H1 (cell line): ENCODE measurements at regions of chr1 and their contacts with region 1.

Region 1: DNA sequence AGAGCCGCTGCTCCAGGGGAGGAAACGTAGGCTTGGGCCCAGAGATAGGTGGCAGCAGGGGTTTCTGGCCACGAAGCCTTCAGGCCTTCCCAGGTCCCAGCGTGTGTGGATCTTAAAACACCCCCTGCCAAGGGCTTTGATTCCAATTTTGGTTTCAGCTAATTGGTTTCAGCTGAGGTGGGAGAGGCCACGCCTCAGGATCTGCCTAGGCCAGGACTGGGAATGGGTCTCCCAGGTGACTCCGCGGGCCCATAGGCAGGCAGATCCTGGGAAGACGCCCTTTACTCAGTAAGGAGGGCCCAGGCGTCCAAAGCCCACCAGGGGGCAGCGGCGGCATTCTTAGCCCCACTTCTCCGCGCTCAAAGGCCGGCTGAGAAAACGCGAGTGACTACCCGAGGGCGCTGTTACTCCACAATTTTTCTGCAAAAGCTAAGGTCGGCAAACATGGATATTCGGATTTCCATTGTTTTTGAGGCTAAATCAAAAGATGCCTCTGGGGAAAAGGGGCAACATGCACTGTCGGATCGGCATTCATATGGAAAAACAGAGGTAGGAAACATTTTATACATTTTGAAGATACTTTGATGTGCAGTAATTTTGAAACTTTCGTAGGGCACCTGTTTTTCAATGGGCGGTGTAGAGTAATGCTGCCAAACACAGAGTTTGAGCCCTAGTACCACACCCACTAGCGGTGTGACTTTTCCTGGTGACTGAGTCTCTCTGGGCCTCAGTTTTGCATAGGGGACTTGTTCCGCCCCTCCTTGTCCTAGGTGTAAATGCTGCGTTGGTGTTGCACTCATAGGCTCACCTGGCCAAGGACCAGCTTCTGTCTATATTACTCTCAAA is 31.8 kb upstream of the BCL10 start:
- DNase-seq: peak; percentile 82 to 95
- H3K4me3 ChIP-seq: no peak overlapping the region; a peak in 2 of 8 replicates
- H3K27ac ChIP-seq: no peak overlapping the region
- H3K4me1 ChIP-seq: peaks cover 2 to 6% (median 3%) of the 10 kb centered on the region in 4 experiments; a peak in 4 of 7 replicates
- H3K27me3 ChIP-seq: no peaks in the 10 kb centered on the region
- CTCF ChIP-seq: peak; percentile 85 to 99 (median 98)
- EP300 ChIP-seq: no peak
- POLR2A ChIP-seq: no peak
- RAD21 ChIP-seq: peak; percentile 99

Region 2: DNA sequence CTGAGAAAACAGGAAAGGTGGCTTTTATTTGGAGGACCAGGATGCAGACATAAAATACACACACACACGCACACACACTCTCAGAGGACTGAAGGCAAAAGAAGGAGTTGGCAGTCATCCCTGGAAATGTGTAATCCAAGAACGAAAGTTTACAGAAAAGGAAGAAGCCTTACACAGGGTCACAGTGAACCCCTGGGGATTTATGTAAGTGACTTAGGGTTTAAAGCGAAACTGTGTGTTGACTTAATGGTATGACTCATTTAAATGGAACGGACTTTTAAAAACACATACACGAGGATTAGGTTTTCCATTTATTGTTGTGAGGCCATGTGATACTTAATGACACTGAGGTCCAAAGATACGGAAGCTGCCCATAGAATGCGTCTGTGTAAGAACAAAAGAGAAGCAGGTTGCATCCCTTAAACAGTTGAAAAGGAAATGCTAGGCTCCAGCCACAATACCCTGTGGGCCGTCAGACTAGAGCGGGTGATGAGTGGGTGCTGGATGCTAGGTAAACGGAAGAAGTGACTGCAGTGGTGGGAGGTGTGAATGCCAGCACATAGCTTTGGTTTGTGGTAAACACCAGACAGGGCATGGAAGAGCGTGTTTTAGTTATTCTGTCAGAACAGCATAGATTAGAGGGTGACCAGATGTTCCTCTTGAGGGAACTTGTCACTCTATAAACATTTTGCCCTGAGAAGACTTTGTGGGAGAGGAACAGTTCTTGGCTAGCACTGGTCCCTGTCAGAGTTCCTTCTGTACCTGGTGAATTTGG is 10.2 kb before region 1 on chr1:
- CTCF ChIA-PET with region 1: interaction called, 25 read pairs
- POLR2A ChIA-PET with region 1: no interaction called
- DNase-seq: no peak
- H3K4me3 ChIP-seq: no peak overlapping the region
- H3K27ac ChIP-seq: no peak overlapping the region
- H3K4me1 ChIP-seq: peaks cover 0 to 2% (median 0%) of the 10 kb centered on the region in 4 experiments; a peak in 1 of 7 replicates
- H3K27me3 ChIP-seq: no peaks in the 10 kb centered on the region
- CTCF ChIP-seq: no peak
- EP300 ChIP-seq: no peak
- POLR2A ChIP-seq: no peak
- RAD21 ChIP-seq: no peak

Region 3: GRCh38 chr1:85330711-85331290 is 22.6 kb after region 1 on chr1:
- CTCF ChIA-PET with region 1: interaction called, 11 read pairs
- POLR2A ChIA-PET with region 1: no interaction called
- DNase-seq: no peak
- H3K4me3 ChIP-seq: no peak overlapping the region
- H3K27ac ChIP-seq: no peak overlapping the region
- H3K4me1 ChIP-seq: peaks cover 0 to 16% (median 1%) of the 10 kb centered on the region in 4 experiments; a peak in 4 of 7 replicates
- H3K27me3 ChIP-seq: no peaks in the 10 kb centered on the region
- CTCF ChIP-seq: no peak
- EP300 ChIP-seq: no peak
- POLR2A ChIP-seq: no peak
- RAD21 ChIP-seq: no peak

Region 4: DNA sequence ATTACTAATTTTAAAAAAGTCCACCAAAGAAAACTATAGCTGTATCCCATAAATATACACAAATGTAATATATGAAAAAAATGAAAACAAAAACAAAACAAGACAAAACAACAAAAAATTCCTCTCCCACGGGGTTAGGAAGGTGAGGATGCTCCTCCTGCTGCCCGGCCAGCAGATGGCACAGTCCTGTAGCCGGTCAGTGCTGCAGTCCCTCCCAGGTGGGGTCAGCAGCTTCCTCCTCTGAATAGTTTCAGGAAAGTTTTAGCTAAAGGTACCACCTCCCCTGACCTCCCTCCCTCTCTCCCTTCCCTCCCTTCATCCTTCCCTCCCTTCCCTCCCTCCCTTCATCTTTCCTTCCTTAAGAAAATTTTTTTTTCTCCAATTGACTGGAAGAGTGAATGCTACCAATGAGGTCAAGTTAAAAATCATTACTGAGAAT is 36.1 kb after region 1 on chr1:
- CTCF ChIA-PET with region 1: interaction called, 21 read pairs
- POLR2A ChIA-PET with region 1: interaction called, 3 read pairs
- DNase-seq: peak in 1 of 2 experiments; percentile 86
- H3K4me3 ChIP-seq: no peak overlapping the region
- H3K27ac ChIP-seq: no peak overlapping the region
- H3K4me1 ChIP-seq: peaks cover 0 to 7% (median 2%) of the 10 kb centered on the region in 4 experiments; a peak in 3 of 7 replicates
- H3K27me3 ChIP-seq: no peaks in the 10 kb centered on the region
- CTCF ChIP-seq: peak; percentile 81 to 95 (median 88)
- EP300 ChIP-seq: peak in 1 of 2 experiments; percentile 16; a peak in 1 of 3 replicates
- POLR2A ChIP-seq: no peak
- RAD21 ChIP-seq: peak; percentile 85 to 86

Region 5: DNA sequence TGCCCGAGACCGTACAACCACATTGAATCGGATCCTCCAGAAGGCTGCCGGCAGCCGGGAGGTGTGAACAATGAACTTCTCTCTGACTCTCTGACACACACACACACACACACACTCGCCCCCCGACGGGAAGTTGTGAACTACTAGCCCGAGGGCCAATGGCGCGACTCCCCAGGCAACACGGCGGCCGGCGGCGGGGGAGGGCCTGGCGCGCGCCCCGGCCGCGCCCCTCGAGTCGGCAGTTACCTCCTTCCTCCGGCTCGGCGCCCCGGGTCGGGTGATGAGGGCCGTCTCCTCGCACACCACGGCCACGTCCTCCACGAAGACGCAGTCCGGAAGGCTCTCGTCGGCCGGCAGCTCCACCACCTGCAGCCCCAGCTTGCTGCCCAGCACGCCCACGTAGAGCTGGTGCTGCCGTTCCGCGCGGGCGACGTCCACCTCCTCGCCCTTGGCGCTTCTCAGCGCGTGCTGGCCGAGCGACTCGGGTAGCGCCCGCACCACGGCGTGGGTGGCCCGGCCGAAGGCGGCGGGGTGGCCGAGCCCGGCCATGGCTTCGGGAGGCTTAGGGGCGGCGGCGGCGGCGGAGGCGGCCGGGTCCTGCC is 156.4 kb after region 1 on chr1:
- CTCF ChIA-PET with region 1: interaction called, 16 read pairs
- POLR2A ChIA-PET with region 1: no interaction called
- DNase-seq: peak; percentile 34 to 83
- H3K4me3 ChIP-seq: peak overlapping the region; percentile 62 to 87 (median 62)
- H3K27ac ChIP-seq: no peak overlapping the region
- H3K4me1 ChIP-seq: peaks cover 0 to 10% (median 3%) of the 10 kb centered on the region in 4 experiments; a peak in 6 of 7 replicates
- H3K27me3 ChIP-seq: peaks cover 0 to 23% (median 16%) of the 10 kb centered on the region in 4 experiments; a peak in 6 of 7 replicates
- CTCF ChIP-seq: no peak
- EP300 ChIP-seq: no peak
- POLR2A ChIP-seq: no peak; a peak in 1 of 3 replicates
- RAD21 ChIP-seq: no peak

Region 6: DNA sequence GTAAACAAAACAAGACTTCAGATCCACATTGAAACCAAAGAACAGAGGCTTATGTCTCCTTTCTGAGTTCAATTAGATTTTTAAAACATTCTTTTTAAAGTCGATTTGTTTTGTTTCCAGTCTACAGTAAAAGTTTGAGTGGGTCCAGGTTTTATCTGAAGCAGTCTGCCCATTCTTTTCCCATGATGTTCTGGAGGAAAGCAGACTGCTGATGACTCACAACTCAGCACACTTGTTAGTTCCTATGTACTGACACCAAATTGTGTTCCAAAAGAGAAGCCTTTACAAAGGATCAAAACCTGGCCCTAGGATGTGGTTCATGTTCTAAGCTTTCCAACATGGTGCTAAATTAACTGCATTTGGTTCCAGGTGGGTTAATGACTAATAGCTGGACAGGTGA is 260.9 kb after region 1 on chr1:
- CTCF ChIA-PET with region 1: interaction called, 17 read pairs
- POLR2A ChIA-PET with region 1: no interaction called
- DNase-seq: no peak
- H3K4me3 ChIP-seq: no peak overlapping the region
- H3K27ac ChIP-seq: no peak overlapping the region
- H3K4me1 ChIP-seq: no peaks in the 10 kb centered on the region
- H3K27me3 ChIP-seq: peaks cover 0 to 1% (median 0%) of the 10 kb centered on the region in 4 experiments; a peak in 1 of 7 replicates
- CTCF ChIP-seq: no peak
- EP300 ChIP-seq: no peak
- POLR2A ChIP-seq: no peak
- RAD21 ChIP-seq: no peak

Region 7: GRCh38 chr1:85692730-85693314 is 384.6 kb after region 1 on chr1:
- CTCF ChIA-PET with region 1: interaction called, 17 read pairs
- POLR2A ChIA-PET with region 1: no interaction called
- DNase-seq: no peak
- H3K4me3 ChIP-seq: no peak overlapping the region
- H3K27ac ChIP-seq: no peak overlapping the region
- H3K4me1 ChIP-seq: no peaks in the 10 kb centered on the region
- H3K27me3 ChIP-seq: no peaks in the 10 kb centered on the region
- CTCF ChIP-seq: peak in 2 of 3 experiments; percentile 6 to 22; a peak in 2 of 4 replicates
- EP300 ChIP-seq: no peak
- POLR2A ChIP-seq: no peak
- RAD21 ChIP-seq: peak in 1 of 2 experiments; percentile 45; a peak in 3 of 4 replicates